ENCODE measurements at regions of chr3 and their contacts with region 1.

Region 1: GRCh38 chr3:16600780-16601539 is 4.3 kb downstream of the DAZL start:
- DNase-seq: no peak
- H3K4me3 ChIP-seq: no peak overlapping the region
- H3K27ac ChIP-seq: no peak overlapping the region
- H3K4me1 ChIP-seq: no peaks in the 10 kb centered on the region
- H3K27me3 ChIP-seq: no peaks in the 10 kb centered on the region
- CTCF ChIP-seq: peak; percentile 72 to 93 (median 74)
- POLR2A ChIP-seq: no peak

Region 2: GRCh38 chr3:16665282-16665741 is 64.4 kb after region 1 on chr3:
- intact Hi-C with region 1: no loop called
- DNase-seq: no peak
- H3K4me3 ChIP-seq: no peak overlapping the region
- H3K27ac ChIP-seq: no peak overlapping the region
- H3K4me1 ChIP-seq: no peaks in the 10 kb centered on the region
- H3K27me3 ChIP-seq: no peaks in the 10 kb centered on the region
- CTCF ChIP-seq: no peak
- POLR2A ChIP-seq: no peak

Region 3: GRCh38 chr3:17233398-17233800 is 632.4 kb after region 1 on chr3:
- intact Hi-C with region 1: loop called (anchors 10 kb)
- DNase-seq: no peak
- H3K4me3 ChIP-seq: no peak overlapping the region
- H3K27ac ChIP-seq: no peak overlapping the region
- H3K4me1 ChIP-seq: no peaks in the 10 kb centered on the region
- H3K27me3 ChIP-seq: no peaks in the 10 kb centered on the region
- CTCF ChIP-seq: peak in 1 of 3 experiments; percentile 51
- POLR2A ChIP-seq: no peak